Naive thymus-derived CD4-positive, alpha-beta T cell (primary cell): ENCODE measurements at regions of chr10 and their contacts with region 1.

Region 1: GRCh38 chr10:42866115-42866995 is 83.8 kb downstream of the BMS1 start:
- DNase-seq: peak; percentile 26 to 56 (median 36)
- ATAC-seq: peak; percentile 82
- H3K4me3 ChIP-seq: no peak overlapping the region
- H3K4me3 Mint-ChIP-seq: peak overlapping the region in 5 of 10 donors; percentile 45 to 64 (median 51)
- H3K27ac ChIP-seq: no peak overlapping the region
- H3K27ac Mint-ChIP-seq: no peak overlapping the region
- H3K4me1 ChIP-seq: no peaks in the 10 kb centered on the region
- H3K4me1 Mint-ChIP-seq: peaks cover 0 to 11% (median 7%) of the 10 kb centered on the region in 7 donors
- H3K27me3 ChIP-seq: no peaks in the 10 kb centered on the region
- H3K27me3 Mint-ChIP-seq: peaks cover 27 to 45% (median 43%) of the 10 kb centered on the region in 5 donors

Region 2: DNA sequence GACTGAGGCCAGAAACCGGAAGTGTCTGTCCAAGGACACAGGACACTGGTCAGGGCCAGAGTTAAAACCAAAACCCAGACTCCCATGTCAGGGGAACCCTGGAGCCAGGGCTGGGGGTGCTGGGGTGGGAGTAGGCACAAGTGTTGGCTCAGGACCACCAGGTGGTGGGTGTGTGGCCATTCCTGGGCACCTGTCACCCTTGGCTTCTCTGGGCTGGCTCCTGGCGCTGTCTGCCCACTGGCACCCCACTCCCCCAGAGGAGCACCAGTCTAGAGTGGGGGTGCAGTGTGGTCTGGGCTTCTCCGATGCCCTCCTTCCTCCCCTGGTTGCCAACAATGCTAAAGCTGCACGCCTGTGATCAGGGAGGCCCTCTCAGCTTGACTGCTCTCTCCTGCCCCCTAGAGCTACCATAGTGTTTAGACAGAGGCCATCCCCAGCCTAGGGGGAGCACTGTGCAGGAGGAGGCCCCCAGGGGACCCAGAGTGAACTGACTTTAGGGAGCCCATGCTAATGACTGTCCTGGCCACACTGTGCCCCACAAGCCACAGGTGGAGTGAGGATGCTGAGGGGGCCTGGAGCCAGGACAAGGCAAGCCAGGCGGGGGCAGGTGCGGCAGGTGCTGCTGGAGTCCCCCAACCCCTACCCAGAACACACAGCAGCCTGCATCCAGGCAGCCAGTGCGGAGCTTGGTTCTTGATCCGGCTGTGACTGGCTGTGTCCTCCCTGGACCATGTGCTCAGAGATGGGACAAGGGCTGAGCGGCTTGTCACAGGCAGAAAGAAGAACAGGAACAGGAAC is 389.5 kb after region 1 on chr10:
- CTCF ChIA-PET with region 1: no interaction called
- POLR2A ChIA-PET with region 1: no interaction called
- intact Hi-C with region 1: loop called in 1 of 2 experiments (anchors 2 kb)
- DNase-seq: peak in 1 of 9 donors; percentile 14
- ATAC-seq: peak; percentile 65
- H3K4me3 ChIP-seq: no peak overlapping the region
- H3K4me3 Mint-ChIP-seq: no peak overlapping the region
- H3K27ac ChIP-seq: no peak overlapping the region
- H3K27ac Mint-ChIP-seq: no peak overlapping the region
- H3K4me1 ChIP-seq: peaks cover 0 to 26% of the 10 kb centered on the region in 2 donors
- H3K4me1 Mint-ChIP-seq: peaks cover 5 to 20% (median 6%) of the 10 kb centered on the region in 7 donors
- H3K27me3 ChIP-seq: no peaks in the 10 kb centered on the region
- H3K27me3 Mint-ChIP-seq: peaks cover 0 to 4% (median 0%) of the 10 kb centered on the region in 5 donors